A673 (cell line): ENCODE measurements at regions of chr2 and their contacts with region 1.

Region 1: GRCh38 chr2:28958689-28959088 is 22.4 kb upstream of the TOGARAM2 start:
- DNase-seq: peak; percentile 89
- H3K4me3 ChIP-seq: no peak overlapping the region
- H3K27ac ChIP-seq: no peak overlapping the region
- H3K4me1 ChIP-seq: peaks cover 8% of the 10 kb centered on the region
- H3K27me3 ChIP-seq: no peaks in the 10 kb centered on the region
- CTCF ChIP-seq: peak; percentile 71

Region 2: GRCh38 chr2:28821295-28821958 is 137.3 kb before region 1 on chr2:
- CTCF ChIA-PET with region 1: no interaction called
- POLR2A ChIA-PET with region 1: no interaction called
- intact Hi-C with region 1: loop called (anchors 5 kb)
- DNase-seq: peak; percentile 70
- H3K4me3 ChIP-seq: no peak overlapping the region
- H3K27ac ChIP-seq: no peak overlapping the region
- H3K4me1 ChIP-seq: no peaks in the 10 kb centered on the region
- H3K27me3 ChIP-seq: no peaks in the 10 kb centered on the region
- CTCF ChIP-seq: peak; percentile 73

Region 3: DNA sequence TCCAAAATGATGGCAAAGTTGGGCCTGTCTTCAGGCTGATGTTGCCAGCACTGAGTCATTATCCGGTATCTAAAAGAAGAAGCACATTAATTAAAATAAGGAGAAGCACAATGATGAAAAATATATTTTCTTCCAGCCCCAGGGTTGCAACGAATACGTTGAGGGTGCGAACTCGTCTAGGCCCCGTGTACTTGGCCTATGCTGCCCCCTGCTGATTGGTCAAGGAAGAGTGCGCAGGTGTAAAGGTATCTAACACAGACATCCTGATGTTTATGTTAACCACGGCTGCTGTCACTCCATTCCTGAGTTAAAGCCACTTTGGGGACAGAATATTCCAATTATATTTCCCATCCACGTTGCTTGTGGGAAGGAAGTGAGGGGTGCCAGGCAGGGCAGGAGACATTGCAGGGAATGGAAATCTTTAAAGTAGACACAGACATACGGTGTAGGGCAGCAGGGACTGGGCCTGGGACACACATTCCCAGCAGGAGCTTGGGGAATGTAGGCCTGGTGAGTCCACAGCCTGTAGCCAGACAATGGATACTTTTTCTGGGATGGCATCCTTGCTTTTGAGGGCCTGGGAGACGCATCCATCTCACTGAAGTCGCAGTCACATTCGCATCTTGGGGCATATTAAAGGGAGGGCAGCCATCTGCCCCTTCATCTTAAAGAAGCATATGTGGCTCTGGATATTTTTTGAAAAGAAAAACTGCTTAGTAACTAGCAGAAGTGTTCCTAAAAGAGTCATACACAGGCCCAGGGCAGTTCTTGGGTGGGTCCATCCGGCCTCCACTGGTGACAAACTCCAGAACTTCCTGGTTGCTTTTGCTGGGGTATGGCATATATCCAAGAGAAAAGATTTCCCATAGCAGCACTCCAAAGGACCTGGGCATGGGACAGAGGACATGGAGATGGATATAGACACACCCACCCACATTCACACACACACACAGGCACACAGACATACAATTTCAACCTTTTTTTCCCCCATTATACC is 238.4 kb after region 1 on chr2:
- CTCF ChIA-PET with region 1: interaction called, 5 read pairs
- POLR2A ChIA-PET with region 1: no interaction called
- intact Hi-C with region 1: loop called (anchors 1 kb)
- DNase-seq: peak; percentile 79
- H3K4me3 ChIP-seq: no peak overlapping the region
- H3K27ac ChIP-seq: no peak overlapping the region
- H3K4me1 ChIP-seq: no peaks in the 10 kb centered on the region
- H3K27me3 ChIP-seq: no peaks in the 10 kb centered on the region
- CTCF ChIP-seq: peak; percentile 89

Region 4: DNA sequence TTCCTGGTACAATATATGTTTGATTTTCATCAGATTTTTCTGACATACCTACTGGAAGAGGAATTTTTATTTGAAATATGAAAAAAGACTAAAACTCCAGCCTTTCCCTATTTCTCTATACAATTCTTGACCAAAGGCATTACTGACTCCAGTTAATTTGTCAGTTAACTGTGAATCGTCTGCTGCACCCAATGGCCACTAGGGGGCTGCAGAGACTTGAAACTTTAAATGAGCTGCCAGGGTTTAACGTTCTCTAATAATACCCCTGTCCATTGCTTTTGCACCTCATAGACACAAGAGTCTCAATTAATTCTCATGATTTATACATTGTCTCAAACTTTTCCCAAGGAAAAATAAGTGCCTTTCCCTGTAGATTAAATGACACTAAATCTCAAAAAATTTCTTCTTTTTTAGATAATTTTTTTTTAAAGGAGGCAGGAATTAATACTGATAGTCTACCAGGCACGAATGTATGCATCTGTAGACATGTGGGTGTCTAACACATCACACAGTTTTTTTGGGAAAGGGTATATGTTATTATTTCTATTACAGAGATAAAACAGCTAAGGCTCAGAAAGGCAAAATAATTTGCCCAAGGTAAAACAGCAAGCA is 964.5 kb after region 1 on chr2:
- CTCF ChIA-PET with region 1: no interaction called
- POLR2A ChIA-PET with region 1: no interaction called
- intact Hi-C with region 1: loop called (anchors 2 kb)
- DNase-seq: peak; percentile 86
- H3K4me3 ChIP-seq: no peak overlapping the region
- H3K27ac ChIP-seq: no peak overlapping the region
- H3K4me1 ChIP-seq: peaks cover 10% of the 10 kb centered on the region
- H3K27me3 ChIP-seq: no peaks in the 10 kb centered on the region
- CTCF ChIP-seq: peak; percentile 98

Region 5: DNA sequence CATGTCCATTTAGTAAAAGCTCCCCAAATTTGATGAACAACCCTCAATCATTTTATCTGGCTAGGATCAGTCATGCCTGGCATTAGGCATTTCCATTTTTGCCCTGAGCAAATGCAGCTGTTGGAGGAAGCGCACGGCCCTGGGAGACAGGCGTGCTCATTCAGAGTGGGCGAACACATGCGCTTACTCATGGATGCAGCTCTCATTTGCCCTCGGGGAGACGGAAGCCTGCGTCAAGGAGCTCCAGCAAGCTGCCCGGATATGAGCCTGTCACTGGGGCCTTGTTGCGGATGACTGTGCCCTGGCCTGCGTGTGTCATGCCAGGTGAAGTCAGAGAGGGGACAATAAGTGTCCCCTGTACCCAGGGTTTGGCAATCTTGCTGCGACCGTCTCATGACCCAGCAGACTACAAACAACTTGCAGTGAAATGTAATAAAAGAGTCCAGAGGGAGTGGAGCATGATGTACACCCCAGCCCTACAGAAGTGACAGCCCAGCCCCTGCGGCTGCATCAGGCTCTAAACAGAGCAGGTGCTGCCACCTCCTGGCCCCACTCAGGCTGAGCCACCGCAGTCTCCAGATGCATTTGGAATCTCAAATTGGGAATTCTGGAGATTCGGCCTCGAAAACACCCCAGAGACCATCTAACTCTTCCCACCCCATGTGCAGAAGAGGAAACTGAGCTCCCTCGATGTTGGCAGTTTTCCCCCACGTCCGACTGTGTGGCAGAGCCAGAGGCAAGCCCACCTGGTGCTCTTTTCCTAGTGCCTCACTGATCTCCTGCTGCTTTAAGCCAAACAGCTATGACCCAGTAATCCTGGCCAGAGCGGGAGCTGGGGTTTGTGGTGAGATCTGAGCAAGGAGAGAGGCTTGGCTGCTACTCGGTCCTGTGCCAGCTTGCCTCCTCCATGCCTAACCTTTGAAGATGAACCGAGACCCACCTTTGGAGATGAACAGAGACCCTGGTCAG is 1067.7 kb after region 1 on chr2:
- CTCF ChIA-PET with region 1: interaction called, 3 read pairs
- POLR2A ChIA-PET with region 1: no interaction called
- intact Hi-C with region 1: loop called (anchors 2 kb)
- DNase-seq: peak; percentile 84
- H3K4me3 ChIP-seq: no peak overlapping the region
- H3K27ac ChIP-seq: no peak overlapping the region
- H3K4me1 ChIP-seq: peaks cover 45% of the 10 kb centered on the region
- H3K27me3 ChIP-seq: no peaks in the 10 kb centered on the region
- CTCF ChIP-seq: peak; percentile 92

Region 6: GRCh38 chr2:30072250-30072842 is 1113.7 kb after region 1 on chr2:
- CTCF ChIA-PET with region 1: no interaction called
- POLR2A ChIA-PET with region 1: no interaction called
- intact Hi-C with region 1: loop called (anchors 5 kb)
- DNase-seq: peak; percentile 91
- H3K4me3 ChIP-seq: no peak overlapping the region
- H3K27ac ChIP-seq: no peak overlapping the region
- H3K4me1 ChIP-seq: no peaks in the 10 kb centered on the region
- H3K27me3 ChIP-seq: no peaks in the 10 kb centered on the region
- CTCF ChIP-seq: peak; percentile 85

Region 7: GRCh38 chr2:30115141-30115980 is 1156.7 kb after region 1 on chr2:
- CTCF ChIA-PET with region 1: no interaction called
- POLR2A ChIA-PET with region 1: no interaction called
- intact Hi-C with region 1: loop called (anchors 1 kb)
- DNase-seq: peak; percentile 93
- H3K4me3 ChIP-seq: peak overlapping the region; percentile 3
- H3K27ac ChIP-seq: peak overlapping the region; percentile 72
- H3K4me1 ChIP-seq: peaks cover 30% of the 10 kb centered on the region
- H3K27me3 ChIP-seq: no peaks in the 10 kb centered on the region
- CTCF ChIP-seq: peak; percentile 97